HCT116 (cell line): ENCODE measurements at regions of chr3 and their contacts with region 1.

Region 1: GRCh38 chr3:51718547-51719409 is 11.9 kb downstream of the GRM2 start:
- DNase-seq: peak; percentile 68
- ATAC-seq: peak; percentile 96
- H3K4me3 ChIP-seq: no peak overlapping the region
- H3K27ac ChIP-seq: no peak overlapping the region
- H3K4me1 ChIP-seq: peaks cover 0 to 7% of the 10 kb centered on the region in 2 experiments; a peak in 2 of 4 replicates
- H3K27me3 ChIP-seq: 0 out of 2 replicates have a peak, but pooled peaks cover 4% of the 10 kb centered on the region
- CTCF ChIP-seq: peak; percentile 97 to 100 (median 99)
- POLR2A ChIP-seq: no peak
- RAD21 ChIP-seq: peak; percentile 93

Region 2: DNA sequence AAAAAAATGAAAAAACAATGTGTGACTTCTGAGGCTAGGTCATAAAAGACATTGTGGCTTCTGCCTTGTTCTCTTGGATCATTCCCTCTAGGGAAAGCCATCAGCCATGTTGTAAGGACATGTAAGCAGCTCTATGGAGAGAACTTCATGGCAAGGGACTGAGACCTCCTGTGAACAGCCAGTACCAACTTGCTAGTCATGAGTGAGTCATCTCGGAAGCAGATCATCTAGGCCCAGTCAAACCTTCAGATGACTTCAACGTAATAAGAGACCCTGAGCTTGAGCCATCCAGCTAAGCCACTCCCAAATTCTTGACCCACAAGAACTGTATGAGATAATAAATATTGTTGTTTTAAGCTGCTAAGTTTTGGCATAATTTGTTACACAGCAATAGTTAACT is 1794.1 kb before region 1 on chr3:
- CTCF ChIA-PET with region 1: no interaction called
- POLR2A ChIA-PET with region 1: no interaction called
- RAD21 ChIA-PET with region 1: no interaction called
- intact Hi-C with region 1: no loop called
- DNase-seq: peak; percentile 73
- ATAC-seq: peak; percentile 54
- H3K4me3 ChIP-seq: 0 out of 4 replicates have a peak overlapping the region, but pooled peaks of 1 of the 2 experiments have one; percentile 5
- H3K27ac ChIP-seq: peak overlapping the region; percentile 28; the same call in 1 of the 2 replicates
- H3K4me1 ChIP-seq: peaks cover 14 to 27% of the 10 kb centered on the region in 2 experiments
- H3K27me3 ChIP-seq: no peaks in the 10 kb centered on the region
- CTCF ChIP-seq: no peak
- POLR2A ChIP-seq: no peak
- RAD21 ChIP-seq: no peak

Region 3: DNA sequence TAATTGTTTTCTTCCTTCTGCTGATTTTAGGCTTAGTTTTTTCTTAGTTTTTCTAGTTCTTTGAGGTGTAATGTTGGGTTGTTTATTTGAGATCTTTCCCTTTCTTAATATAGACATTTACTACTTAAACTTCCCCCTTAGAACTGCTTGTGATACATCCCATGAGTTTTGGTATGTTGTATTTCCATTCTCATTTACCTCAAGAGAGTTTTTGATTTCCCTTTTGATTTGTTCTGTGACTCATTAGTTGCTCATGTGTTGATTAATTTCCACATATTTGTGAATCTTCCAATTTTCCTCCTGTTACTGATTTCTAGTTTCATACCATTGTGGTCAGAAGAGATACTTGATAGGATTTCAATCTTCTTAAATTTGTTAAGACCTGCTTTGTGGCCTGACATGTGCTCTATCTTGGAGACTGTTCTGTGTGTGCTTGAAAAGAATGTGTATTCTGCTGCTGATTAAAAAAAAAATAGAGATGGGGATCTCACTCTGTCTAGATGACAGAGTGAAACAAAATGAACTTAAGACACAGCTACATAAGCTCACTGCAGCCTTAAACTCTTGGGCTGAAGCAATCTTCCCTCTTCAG is 10.4 kb after region 1 on chr3:
- CTCF ChIA-PET with region 1: interaction called, 20 read pairs
- POLR2A ChIA-PET with region 1: no interaction called
- RAD21 ChIA-PET with region 1: no interaction called
- intact Hi-C with region 1: no loop called
- DNase-seq: no peak
- ATAC-seq: no peak
- H3K4me3 ChIP-seq: no peak overlapping the region
- H3K27ac ChIP-seq: no peak overlapping the region
- H3K4me1 ChIP-seq: no peaks in the 10 kb centered on the region
- H3K27me3 ChIP-seq: no peaks in the 10 kb centered on the region
- CTCF ChIP-seq: no peak
- POLR2A ChIP-seq: no peak
- RAD21 ChIP-seq: no peak

Region 4: GRCh38 chr3:51799879-51800749 is 81.3 kb after region 1 on chr3:
- CTCF ChIA-PET with region 1: interaction called, 31 read pairs
- POLR2A ChIA-PET with region 1: no interaction called
- RAD21 ChIA-PET with region 1: interaction called in 1 of 2 experiments, 3 read pairs
- intact Hi-C with region 1: loop called (anchors 1 kb)
- DNase-seq: peak; percentile 55
- ATAC-seq: peak; percentile 79
- H3K4me3 ChIP-seq: no peak overlapping the region
- H3K27ac ChIP-seq: no peak overlapping the region
- H3K4me1 ChIP-seq: peaks cover 0 to 14% of the 10 kb centered on the region in 2 experiments; a peak in 2 of 4 replicates
- H3K27me3 ChIP-seq: no peaks in the 10 kb centered on the region
- CTCF ChIP-seq: peak; percentile 75 to 91 (median 87)
- POLR2A ChIP-seq: no peak
- RAD21 ChIP-seq: peak; percentile 78

Region 5: DNA sequence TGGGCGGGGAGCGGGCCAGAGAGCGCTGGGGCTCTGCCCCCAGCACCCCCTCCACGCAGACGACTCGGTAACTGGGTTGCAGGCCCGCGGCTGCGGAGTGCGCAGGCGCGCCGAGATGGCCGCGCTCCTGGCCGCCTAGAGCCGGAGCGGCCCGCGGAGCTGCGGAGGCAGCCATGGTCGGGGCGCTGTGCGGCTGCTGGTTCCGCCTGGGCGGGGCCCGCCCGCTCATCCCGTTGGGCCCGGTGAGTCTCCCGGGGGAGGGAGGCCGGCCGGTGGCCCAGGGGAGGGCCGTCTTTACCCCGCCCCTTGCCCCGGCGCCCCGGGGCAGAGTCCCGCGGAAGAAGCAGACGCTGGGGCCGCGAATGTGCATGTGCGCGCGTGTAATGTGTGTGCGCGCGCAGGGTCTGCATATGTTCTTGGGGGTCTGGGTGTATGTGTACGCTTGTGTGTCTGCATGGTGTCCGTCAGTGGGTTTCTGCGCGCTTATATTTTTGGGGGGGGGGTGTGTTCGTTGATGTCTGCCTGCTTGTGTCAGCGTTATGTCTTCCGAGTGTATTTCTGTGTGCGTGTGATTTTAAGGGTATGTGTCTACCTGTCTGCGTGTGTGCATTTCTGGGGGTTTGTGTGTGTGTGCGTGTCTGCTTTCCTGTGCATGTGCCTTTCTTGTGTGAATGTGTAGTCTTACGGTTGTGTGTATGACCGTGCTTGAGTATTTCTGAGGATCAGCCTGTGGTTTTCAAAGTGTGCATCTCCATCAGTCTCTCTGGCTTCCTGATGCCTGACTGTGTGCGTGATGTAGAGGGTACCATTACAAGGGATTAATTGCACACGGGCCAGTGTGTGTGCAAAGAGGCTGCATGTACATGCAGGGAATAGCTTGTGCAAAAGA is 256.4 kb after region 1 on chr3 and contains the start of gene ABHD14A:
- CTCF ChIA-PET with region 1: interaction called, 10 read pairs
- POLR2A ChIA-PET with region 1: no interaction called
- RAD21 ChIA-PET with region 1: no interaction called
- intact Hi-C with region 1: loop called (anchors 5 kb)
- DNase-seq: no peak
- ATAC-seq: peak; percentile 70
- H3K4me3 ChIP-seq: peak within 1 kb of the TSS; percentile 93 to 99
- H3K27ac ChIP-seq: peak within 1 kb of the TSS; percentile 97
- H3K4me1 ChIP-seq: peaks cover 17 to 45% of the 10 kb centered on the region in 2 experiments
- H3K27me3 ChIP-seq: no peaks in the 10 kb centered on the region
- CTCF ChIP-seq: no peak
- POLR2A ChIP-seq: peak; percentile 61
- RAD21 ChIP-seq: no peak
- total RNA-seq, gene ABHD14A: 11.6 TPM

Region 6: DNA sequence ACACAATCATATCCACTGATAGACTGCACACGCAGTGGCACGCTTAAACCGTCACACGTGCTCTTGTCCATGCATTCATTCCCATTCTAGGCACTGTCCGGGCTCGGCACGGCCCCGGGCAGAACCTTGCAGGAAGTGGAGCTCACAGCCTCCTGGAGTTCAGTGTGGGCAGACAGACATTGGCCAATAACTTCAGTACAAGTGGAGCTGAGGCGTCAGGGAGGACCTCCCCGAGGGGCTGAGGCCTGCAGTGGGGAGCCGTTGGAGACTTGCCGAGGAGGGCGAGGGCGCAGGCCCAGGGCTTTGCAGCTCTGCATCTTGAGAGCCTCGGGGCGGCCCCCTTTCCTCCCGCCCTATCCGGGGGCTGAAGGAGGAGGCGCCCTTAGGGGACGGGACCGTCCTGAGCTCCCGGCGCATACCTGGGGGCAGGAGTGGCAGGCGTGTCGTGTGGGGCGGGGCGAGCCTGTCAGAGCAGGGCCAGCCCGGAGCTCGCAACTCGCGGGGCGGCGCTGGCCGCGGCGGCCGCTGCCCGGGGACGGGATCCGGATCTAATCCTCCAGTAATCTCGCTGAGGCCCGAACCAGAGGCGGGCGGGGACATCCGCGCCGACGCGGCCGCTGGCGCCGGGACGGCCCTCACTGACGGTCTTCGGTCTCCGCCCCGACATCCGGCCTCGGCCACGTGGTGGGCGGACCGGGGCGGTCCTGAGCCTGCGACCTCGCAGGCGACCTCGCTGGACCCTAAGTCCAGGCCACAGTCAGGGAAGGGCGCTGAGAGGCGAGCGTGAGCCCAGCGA is 264.2 kb after region 1 on chr3 and contains the start of gene ACY1:
- CTCF ChIA-PET with region 1: interaction called, 10 read pairs
- POLR2A ChIA-PET with region 1: no interaction called
- RAD21 ChIA-PET with region 1: no interaction called
- intact Hi-C with region 1: loop called (anchors 5 kb)
- DNase-seq: peak; percentile 57
- ATAC-seq: peak; percentile 89
- H3K4me3 ChIP-seq: peak within 1 kb of the TSS; percentile 75 to 86
- H3K27ac ChIP-seq: peak within 1 kb of the TSS; percentile 82
- H3K4me1 ChIP-seq: peaks cover 24 to 56% of the 10 kb centered on the region in 2 experiments
- H3K27me3 ChIP-seq: no peaks in the 10 kb centered on the region
- CTCF ChIP-seq: no peak
- POLR2A ChIP-seq: peak; percentile 18
- RAD21 ChIP-seq: no peak
- total RNA-seq, gene ACY1: 73.2 TPM

Region 7: DNA sequence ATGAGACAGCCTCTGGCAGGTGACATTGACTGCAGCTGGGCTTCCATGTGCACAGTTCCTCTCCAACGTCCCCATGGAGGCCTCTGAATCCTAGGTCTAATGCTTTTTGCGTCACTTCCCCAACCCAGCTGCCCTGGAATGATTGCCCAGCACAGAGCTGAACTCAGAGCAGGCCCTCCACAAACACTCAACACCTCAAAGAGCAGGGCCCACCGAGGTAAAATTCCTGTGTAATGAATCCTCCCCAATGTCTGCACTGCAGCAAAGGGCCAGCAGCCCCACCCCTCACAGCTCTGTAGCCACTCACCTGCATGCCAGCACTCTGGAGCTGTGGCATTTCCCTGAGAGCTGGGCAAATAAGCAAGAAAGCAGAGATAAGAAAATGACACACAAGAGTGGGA is 380.2 kb after region 1 on chr3:
- CTCF ChIA-PET with region 1: no interaction called
- POLR2A ChIA-PET with region 1: no interaction called
- RAD21 ChIA-PET with region 1: no interaction called
- intact Hi-C with region 1: no loop called
- DNase-seq: no peak
- ATAC-seq: no peak
- H3K4me3 ChIP-seq: no peak overlapping the region
- H3K27ac ChIP-seq: no peak overlapping the region
- H3K4me1 ChIP-seq: peaks cover 0 to 2% of the 10 kb centered on the region in 2 experiments; a peak in 1 of 4 replicates
- H3K27me3 ChIP-seq: no peaks in the 10 kb centered on the region
- CTCF ChIP-seq: no peak
- POLR2A ChIP-seq: no peak
- RAD21 ChIP-seq: no peak